ENCODE measurements at regions of chr7 and their contacts with region 1.

Region 1: DNA sequence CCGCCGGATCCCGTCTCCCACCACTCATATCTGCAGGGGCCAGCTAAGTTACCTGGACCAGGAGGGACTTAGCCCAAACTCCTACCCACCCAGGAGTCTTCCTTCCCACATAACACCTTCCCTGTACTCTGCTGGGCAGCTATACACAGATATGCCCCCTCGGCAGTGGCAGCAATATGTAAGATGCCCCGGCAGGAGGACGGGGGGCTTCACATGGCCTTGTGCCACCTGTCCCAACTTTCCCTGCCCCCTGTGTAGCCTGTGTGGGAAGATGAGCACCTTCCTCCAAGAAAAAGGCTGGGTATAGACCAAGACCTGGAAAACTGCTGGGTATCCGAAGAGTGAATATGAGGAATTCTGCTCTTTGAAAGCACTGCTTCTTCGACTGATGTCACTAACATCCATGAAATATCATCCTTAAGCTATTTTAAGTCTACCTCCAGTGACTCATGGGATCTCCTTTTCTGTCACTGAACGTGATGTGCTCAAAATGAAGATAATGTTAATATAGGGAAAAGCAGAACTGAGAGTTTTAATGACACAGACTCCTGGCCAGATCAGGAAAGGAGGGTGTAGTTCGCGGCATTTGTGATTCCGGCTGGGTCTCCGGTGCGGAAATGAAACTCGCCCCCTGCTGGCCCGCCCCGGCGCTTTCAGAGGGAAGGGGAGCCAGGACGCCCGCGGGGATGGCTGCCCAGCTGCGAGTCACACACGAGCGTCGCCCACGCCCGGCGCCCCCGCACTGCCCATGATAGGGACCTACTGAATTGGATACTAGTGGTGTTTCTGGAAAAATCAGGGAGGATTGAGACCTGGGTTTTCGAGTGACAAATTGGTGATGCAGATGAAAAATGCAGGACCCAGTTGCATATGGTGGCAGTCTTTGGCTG is 256.9 kb upstream of the NFE2L3 start:
- DNase-seq: peak; percentile 63
- ATAC-seq: peak; percentile 79
- H3K4me3 ChIP-seq: peak overlapping the region; percentile 58
- H3K27ac ChIP-seq: peak overlapping the region; percentile 59
- H3K4me1 ChIP-seq: peaks cover 29% of the 10 kb centered on the region
- H3K27me3 ChIP-seq: no peaks in the 10 kb centered on the region; a peak in 1 of 4 replicates
- CTCF ChIP-seq: peak; percentile 59 to 81 (median 77)
- EP300 ChIP-seq: peak; percentile 81 to 93
- POLR2A ChIP-seq: no peak
- RAD21 ChIP-seq: peak; percentile 53

Region 2: GRCh38 chr7:25862260-25863037 is 32.7 kb before region 1 on chr7:
- CTCF ChIA-PET with region 1: interaction called, 9 read pairs
- POLR2A ChIA-PET with region 1: no interaction called
- RAD21 ChIA-PET with region 1: interaction called, 13 read pairs
- SMC1A ChIA-PET with region 1: interaction called, 7 read pairs
- in situ Hi-C with region 1: no loop called
- intact Hi-C with region 1: no loop called
- DNase-seq: peak; percentile 95
- ATAC-seq: peak; percentile 93
- H3K4me3 ChIP-seq: peak overlapping the region; percentile 43; the same call in 1 of the 2 replicates
- H3K27ac ChIP-seq: no peak overlapping the region
- H3K4me1 ChIP-seq: peaks cover 4% of the 10 kb centered on the region; the same call in 1 of the 2 replicates
- H3K27me3 ChIP-seq: peaks cover 2 to 25% of the 10 kb centered on the region in 2 experiments
- CTCF ChIP-seq: no peak
- EP300 ChIP-seq: no peak
- POLR2A ChIP-seq: no peak
- RAD21 ChIP-seq: no peak

Region 3: GRCh38 chr7:25951031-25951948 is 56.1 kb after region 1 on chr7:
- CTCF ChIA-PET with region 1: interaction called, 60 read pairs
- POLR2A ChIA-PET with region 1: interaction called, 6 read pairs
- RAD21 ChIA-PET with region 1: interaction called, 9 read pairs
- SMC1A ChIA-PET with region 1: interaction called, 14 read pairs
- in situ Hi-C with region 1: no loop called
- intact Hi-C with region 1: loop called (anchors 2 kb)
- DNase-seq: peak; percentile 69
- ATAC-seq: peak; percentile 89
- H3K4me3 ChIP-seq: peak overlapping the region; percentile 86
- H3K27ac ChIP-seq: peak overlapping the region; percentile 49
- H3K4me1 ChIP-seq: peaks cover 23% of the 10 kb centered on the region
- H3K27me3 ChIP-seq: no peaks in the 10 kb centered on the region
- CTCF ChIP-seq: no peak
- EP300 ChIP-seq: no peak
- POLR2A ChIP-seq: peak; percentile 68
- RAD21 ChIP-seq: no peak

Region 4: GRCh38 chr7:26061688-26062150 is 166.6 kb after region 1 on chr7:
- CTCF ChIA-PET with region 1: interaction called, 264 read pairs
- POLR2A ChIA-PET with region 1: interaction called, 6 read pairs
- RAD21 ChIA-PET with region 1: interaction called, 62 read pairs
- SMC1A ChIA-PET with region 1: interaction called, 200 read pairs
- in situ Hi-C with region 1: loop called (anchors 5 kb)
- intact Hi-C with region 1: loop called (anchors 1 kb)
- DNase-seq: peak; percentile 37
- ATAC-seq: peak; percentile 98
- H3K4me3 ChIP-seq: no peak overlapping the region
- H3K27ac ChIP-seq: no peak overlapping the region
- H3K4me1 ChIP-seq: no peaks in the 10 kb centered on the region
- H3K27me3 ChIP-seq: no peaks in the 10 kb centered on the region; a peak in 1 of 4 replicates
- CTCF ChIP-seq: peak; percentile 86 to 87 (median 87)
- EP300 ChIP-seq: no peak
- POLR2A ChIP-seq: no peak
- RAD21 ChIP-seq: peak; percentile 90

Region 5: DNA sequence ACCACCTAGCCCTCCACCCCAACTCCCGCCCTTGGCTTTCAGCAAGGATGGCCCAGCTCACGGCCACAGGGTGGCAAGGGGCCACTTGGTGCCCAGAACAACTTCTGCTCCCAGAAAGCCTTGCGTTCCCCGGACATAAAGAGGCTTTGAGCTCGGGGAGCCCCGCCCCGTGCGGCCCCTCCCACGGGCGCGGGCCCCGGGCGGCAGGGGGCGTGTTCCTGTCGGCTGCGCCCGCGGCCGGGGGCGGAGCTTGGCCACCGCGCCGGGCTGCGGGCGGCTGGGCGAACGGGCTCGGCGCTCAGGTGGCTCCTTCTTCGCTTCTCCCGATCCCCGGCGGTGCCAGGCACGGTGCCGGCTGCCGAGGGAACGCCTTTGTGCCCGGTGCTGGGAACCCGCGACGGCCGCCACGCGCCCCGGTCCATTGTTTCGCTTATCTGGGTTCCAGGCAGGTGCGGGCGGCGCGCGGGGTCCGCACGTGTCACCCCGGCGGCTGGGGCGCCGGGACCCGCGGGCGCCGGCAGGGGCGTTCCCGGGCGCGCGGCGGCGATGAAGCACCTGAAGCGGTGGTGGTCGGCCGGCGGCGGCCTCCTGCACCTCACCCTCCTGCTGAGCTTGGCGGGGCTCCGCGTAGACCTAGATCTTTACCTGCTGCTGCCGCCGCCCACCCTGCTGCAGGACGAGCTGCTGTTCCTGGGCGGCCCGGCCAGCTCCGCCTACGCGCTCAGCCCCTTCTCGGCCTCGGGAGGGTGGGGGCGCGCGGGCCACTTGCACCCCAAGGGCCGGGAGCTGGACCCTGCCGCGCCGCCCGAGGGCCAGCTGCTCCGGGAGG is 257.0 kb after region 1 on chr7 and contains the start of gene NFE2L3:
- CTCF ChIA-PET with region 1: interaction called, 8 read pairs
- POLR2A ChIA-PET with region 1: interaction called, 3 read pairs
- RAD21 ChIA-PET with region 1: interaction called, 8 read pairs
- SMC1A ChIA-PET with region 1: interaction called, 5 read pairs
- in situ Hi-C with region 1: no loop called
- intact Hi-C with region 1: loop called (anchors 1 kb)
- DNase-seq: no peak
- ATAC-seq: peak; percentile 75
- H3K4me3 ChIP-seq: peak within 1 kb of the TSS; percentile 72
- H3K27ac ChIP-seq: peak within 1 kb of the TSS; percentile 88
- H3K4me1 ChIP-seq: peaks cover 23% of the 10 kb centered on the region
- H3K27me3 ChIP-seq: no peaks in the 10 kb centered on the region
- CTCF ChIP-seq: peak; percentile 6 to 17 (median 9); a peak in 1 of 6 replicates
- EP300 ChIP-seq: no peak
- POLR2A ChIP-seq: peak; percentile 82
- RAD21 ChIP-seq: no peak
- polyA plus RNA-seq, gene NFE2L3: 4.9 to 8.9 TPM

Region 6: DNA sequence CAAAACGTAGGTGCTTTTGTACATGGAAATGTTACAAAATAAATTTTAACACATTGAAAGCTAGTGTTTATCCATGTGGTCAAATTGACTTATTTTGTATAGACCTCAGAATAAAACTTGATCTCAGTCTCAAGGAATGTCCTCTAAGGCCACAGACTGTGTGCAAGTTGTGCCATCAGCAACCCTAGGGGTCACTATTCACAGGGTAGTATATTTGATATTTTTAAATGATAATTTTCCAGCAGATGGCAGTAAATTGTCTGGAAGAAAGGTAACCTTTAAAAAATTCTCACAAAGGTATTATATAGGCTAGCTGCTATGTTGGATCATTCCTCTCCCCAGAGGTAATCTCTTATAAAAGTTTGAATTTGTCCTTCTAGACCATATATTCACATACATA is 383.6 kb after region 1 on chr7:
- CTCF ChIA-PET with region 1: interaction called, 6 read pairs
- POLR2A ChIA-PET with region 1: no interaction called
- RAD21 ChIA-PET with region 1: no interaction called
- SMC1A ChIA-PET with region 1: interaction called, 7 read pairs
- in situ Hi-C with region 1: no loop called
- intact Hi-C with region 1: loop called (anchors 5 kb)
- DNase-seq: no peak
- ATAC-seq: peak; percentile 84
- H3K4me3 ChIP-seq: no peak overlapping the region
- H3K27ac ChIP-seq: no peak overlapping the region
- H3K4me1 ChIP-seq: no peaks in the 10 kb centered on the region
- H3K27me3 ChIP-seq: no peaks in the 10 kb centered on the region
- CTCF ChIP-seq: peak; percentile 20 to 57 (median 42); a peak in 4 of 6 replicates
- EP300 ChIP-seq: no peak
- POLR2A ChIP-seq: no peak
- RAD21 ChIP-seq: peak; percentile 24; the same call in 1 of the 2 replicates

Region 7: DNA sequence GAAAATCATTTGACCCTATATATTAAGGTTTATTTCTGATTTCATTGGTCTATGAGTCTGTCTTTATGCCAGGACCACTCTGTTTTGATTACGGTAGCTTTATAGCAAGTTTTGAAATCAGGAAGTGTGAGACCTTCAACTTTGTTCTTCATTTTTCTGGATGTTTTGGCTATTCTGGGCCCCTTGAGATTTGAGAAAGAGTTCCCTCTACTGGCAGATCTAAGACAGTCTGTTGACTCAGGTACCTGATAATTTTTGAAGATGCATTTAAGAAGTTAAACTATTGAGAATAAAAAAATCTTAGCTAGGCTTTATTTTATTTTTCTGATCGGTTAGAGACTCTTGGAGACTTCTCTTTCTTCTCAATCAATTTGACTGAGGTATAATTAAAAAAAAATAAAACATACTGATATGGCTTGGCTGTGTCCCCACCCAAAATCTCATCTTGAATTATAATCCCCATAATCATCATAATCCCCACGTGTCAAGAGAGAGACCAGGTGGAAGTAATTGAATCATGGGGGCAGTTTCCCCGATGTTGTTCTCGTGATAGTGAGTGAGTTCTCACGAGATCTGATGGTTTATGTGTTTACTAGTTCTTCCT is 605.7 kb after region 1 on chr7:
- CTCF ChIA-PET with region 1: interaction called, 5 read pairs
- POLR2A ChIA-PET with region 1: no interaction called
- RAD21 ChIA-PET with region 1: interaction called, 3 read pairs
- SMC1A ChIA-PET with region 1: interaction called, 6 read pairs
- in situ Hi-C with region 1: loop called (anchors 10 kb)
- intact Hi-C with region 1: loop called (anchors 2 kb)
- DNase-seq: no peak
- ATAC-seq: peak; percentile 82
- H3K4me3 ChIP-seq: no peak overlapping the region
- H3K27ac ChIP-seq: no peak overlapping the region
- H3K4me1 ChIP-seq: no peaks in the 10 kb centered on the region
- H3K27me3 ChIP-seq: no peaks in the 10 kb centered on the region; a peak in 1 of 4 replicates
- CTCF ChIP-seq: peak; percentile 57 to 60 (median 57)
- EP300 ChIP-seq: no peak
- POLR2A ChIP-seq: no peak
- RAD21 ChIP-seq: peak; percentile 83

Measured in GM12878 (cell line).